HepG2 (cell line): ENCODE measurements at regions of chr13 and their contacts with region 1.

Region 1: GRCh38 chr13:100828226-100828625 is 153.6 kb upstream of the TMTC4 start:
- DNase-seq: peak; percentile 42
- ATAC-seq: peak; percentile 98
- H3K4me3 ChIP-seq: no peak overlapping the region
- H3K27ac ChIP-seq: no peak overlapping the region
- H3K4me1 ChIP-seq: peaks cover 6% of the 10 kb centered on the region
- H3K27me3 ChIP-seq: no peaks in the 10 kb centered on the region; a peak in 1 of 5 replicates
- CTCF ChIP-seq: peak; percentile 71
- EP300 ChIP-seq: no peak
- POLR2A ChIP-seq: no peak
- RAD21 ChIP-seq: peak; percentile 49; the same call in 1 of the 2 replicates

Region 2: DNA sequence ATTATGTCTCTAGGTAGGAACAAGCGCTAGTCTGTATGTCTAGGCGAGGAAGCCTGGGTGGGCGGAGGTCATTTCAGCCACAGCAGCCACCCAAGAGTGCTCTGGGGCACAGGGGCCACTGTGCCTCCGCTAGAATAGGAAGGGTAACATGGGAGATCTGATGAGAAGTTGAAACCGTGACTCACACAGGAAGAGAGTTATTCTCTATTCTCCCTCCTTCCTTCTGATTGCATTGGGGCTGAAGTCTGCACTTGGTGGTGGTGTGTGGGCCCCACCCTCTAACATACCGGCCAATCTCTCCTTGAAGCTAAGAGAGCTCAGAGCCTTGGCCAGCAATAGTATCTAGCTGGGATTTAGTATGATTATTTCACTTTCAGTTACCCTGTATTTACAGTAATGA is 219.3 kb before region 1 on chr13:
- CTCF ChIA-PET with region 1: no interaction called
- POLR2A ChIA-PET with region 1: no interaction called
- in situ Hi-C with region 1: no loop called
- intact Hi-C with region 1: no loop called
- DNase-seq: no peak
- ATAC-seq: no peak
- H3K4me3 ChIP-seq: no peak overlapping the region
- H3K27ac ChIP-seq: no peak overlapping the region
- H3K4me1 ChIP-seq: peaks cover 5% of the 10 kb centered on the region; the same call in 1 of the 2 replicates
- H3K27me3 ChIP-seq: no peaks in the 10 kb centered on the region
- CTCF ChIP-seq: no peak
- EP300 ChIP-seq: no peak
- POLR2A ChIP-seq: no peak
- RAD21 ChIP-seq: no peak

Region 3: DNA sequence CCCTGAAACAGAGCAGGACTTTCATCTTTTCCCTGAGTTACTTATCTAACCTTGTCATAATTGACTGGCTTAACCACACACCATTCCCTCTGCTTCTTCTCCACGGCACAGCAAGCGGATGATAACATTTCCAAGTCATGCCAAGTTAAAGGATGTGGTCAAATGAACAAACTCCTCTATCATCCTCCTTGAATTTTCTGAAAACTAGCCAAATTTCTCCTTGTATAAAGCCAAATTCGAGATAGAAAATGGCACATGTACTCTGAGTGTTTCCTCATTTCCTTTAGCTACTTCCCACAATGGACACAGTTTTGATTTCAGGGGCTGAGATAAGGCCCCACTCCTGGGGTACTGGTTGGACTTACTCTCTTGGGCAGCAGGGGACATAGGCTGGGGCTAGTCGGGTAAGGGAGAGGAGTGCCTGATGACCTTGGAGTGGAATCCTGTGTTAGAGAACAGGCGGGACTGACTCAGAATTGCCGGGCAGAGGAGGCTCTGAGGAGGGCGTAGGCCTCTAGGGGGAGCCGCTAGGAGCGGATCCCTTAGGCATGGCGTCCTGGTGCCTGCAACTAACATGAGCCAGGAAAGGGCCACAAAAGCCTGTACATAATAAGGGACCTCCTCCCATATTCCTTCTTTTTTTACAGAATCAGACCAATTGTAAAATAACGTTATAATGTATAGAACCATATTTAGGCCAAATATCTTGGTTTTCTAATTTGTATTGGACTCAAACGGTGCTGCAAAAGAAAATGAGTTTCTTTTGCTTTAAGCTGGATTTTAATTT is 133.3 kb before region 1 on chr13:
- CTCF ChIA-PET with region 1: no interaction called
- POLR2A ChIA-PET with region 1: no interaction called
- in situ Hi-C with region 1: no loop called
- intact Hi-C with region 1: loop called (anchors 1 kb)
- DNase-seq: peak; percentile 55
- ATAC-seq: peak; percentile 100
- H3K4me3 ChIP-seq: peak overlapping the region in 1 of 3 experiments; percentile 42; a peak in 2 of 6 replicates
- H3K27ac ChIP-seq: no peak overlapping the region
- H3K4me1 ChIP-seq: peaks cover 12% of the 10 kb centered on the region
- H3K27me3 ChIP-seq: peaks cover 0 to 9% of the 10 kb centered on the region in 2 experiments; a peak in 1 of 5 replicates
- CTCF ChIP-seq: peak; percentile 83
- EP300 ChIP-seq: no peak
- POLR2A ChIP-seq: no peak
- RAD21 ChIP-seq: no peak

Region 4: DNA sequence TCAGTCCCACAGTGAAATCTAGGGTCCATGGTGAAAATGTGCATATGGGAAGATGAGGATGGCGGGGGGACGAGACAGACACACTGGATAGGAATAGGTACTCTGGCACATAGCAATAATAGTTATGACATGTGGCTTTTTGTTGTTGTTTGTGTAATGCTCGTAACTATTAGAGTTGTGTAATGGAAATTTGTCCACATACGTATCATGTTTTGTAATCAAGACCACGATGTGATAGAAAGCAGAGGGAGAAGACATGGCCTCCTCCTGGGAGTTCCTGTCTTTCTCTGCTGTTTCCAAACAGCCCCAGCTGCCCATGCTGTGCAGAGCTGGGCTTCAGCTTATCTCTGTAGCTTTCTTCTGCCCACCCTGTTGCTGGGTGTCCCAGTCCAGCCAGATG is 31.6 kb after region 1 on chr13:
- CTCF ChIA-PET with region 1: no interaction called
- POLR2A ChIA-PET with region 1: no interaction called
- in situ Hi-C with region 1: no loop called
- intact Hi-C with region 1: loop called (anchors 1 kb)
- DNase-seq: no peak
- ATAC-seq: no peak
- H3K4me3 ChIP-seq: no peak overlapping the region
- H3K27ac ChIP-seq: no peak overlapping the region
- H3K4me1 ChIP-seq: no peaks in the 10 kb centered on the region
- H3K27me3 ChIP-seq: no peaks in the 10 kb centered on the region
- CTCF ChIP-seq: no peak
- EP300 ChIP-seq: no peak
- POLR2A ChIP-seq: no peak
- RAD21 ChIP-seq: no peak